Activated naive CD4-positive, alpha-beta T cell treated with anti-CD3 and anti-CD28 coated beads for 36 hours (primary cell): ENCODE measurements at regions of chr20 and their contacts with region 1.

Region 1: GRCh38 chr20:2101865-2102584 is 398 bp downstream of the STK35 start:
- DNase-seq: peak; percentile 91
- H3K4me3 Mint-ChIP-seq: peak overlapping the region; percentile 91
- H3K27ac Mint-ChIP-seq: peak overlapping the region; percentile 100
- H3K4me1 Mint-ChIP-seq: peaks cover 32% of the 10 kb centered on the region
- H3K27me3 Mint-ChIP-seq: no peaks in the 10 kb centered on the region

Region 2: GRCh38 chr20:1466211-1467081 is 635.6 kb before region 1 on chr20 and contains the start of gene NSFL1C:
- CTCF ChIA-PET with region 1: no interaction called
- intact Hi-C with region 1: loop called (anchors 2 kb)
- DNase-seq: peak; percentile 97
- H3K4me3 Mint-ChIP-seq: peak within 1 kb of the TSS; percentile 80
- H3K27ac Mint-ChIP-seq: peak within 1 kb of the TSS; percentile 71
- H3K4me1 Mint-ChIP-seq: peaks cover 44% of the 10 kb centered on the region
- H3K27me3 Mint-ChIP-seq: peaks cover 6% of the 10 kb centered on the region
- total RNA-seq, gene NSFL1C: 80.4 to 84.1 TPM

Region 3: DNA sequence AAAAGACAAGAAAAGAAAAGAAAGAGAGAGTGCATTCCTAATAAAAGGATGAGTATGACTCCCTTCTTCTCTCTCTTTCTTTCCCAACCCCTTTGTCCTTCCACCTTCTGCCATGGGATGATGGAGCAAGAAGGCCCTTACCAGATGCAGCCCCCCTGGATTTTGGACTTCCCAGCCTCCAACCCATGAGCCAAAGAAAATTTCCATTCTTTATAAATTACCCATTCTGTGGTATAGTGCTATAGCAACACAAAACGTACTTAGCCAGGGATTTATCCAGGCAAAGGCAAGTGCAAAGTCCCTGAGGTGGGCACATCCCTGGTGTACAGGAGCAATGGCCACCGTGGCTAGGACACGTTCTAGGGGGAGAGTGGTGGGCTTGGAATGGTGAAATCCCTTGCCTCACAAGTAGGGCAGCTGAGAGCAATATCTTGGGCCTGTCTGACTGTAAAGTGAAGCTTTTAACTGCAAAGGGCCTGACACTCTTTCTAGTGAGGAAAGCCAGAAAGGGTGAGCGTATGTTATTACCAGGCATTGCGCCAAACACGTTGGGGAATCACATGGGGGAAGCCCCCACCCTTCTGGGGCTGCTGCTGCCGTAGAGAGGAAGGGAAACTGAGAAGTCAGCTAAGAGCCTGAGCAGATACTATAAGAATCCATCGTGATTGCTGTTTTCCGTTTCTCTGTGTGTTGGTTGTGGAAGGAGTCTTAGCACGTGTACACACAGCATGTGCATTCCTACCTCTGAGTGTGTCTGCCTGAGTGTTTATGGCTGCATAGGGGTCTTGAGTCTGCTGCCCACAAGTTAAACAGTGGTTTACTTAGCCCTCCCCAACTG is 257.5 kb before region 1 on chr20:
- CTCF ChIA-PET with region 1: no interaction called
- intact Hi-C with region 1: loop called (anchors 2 kb)
- DNase-seq: peak; percentile 90
- H3K4me3 Mint-ChIP-seq: no peak overlapping the region
- H3K27ac Mint-ChIP-seq: peak overlapping the region; percentile 77
- H3K4me1 Mint-ChIP-seq: peaks cover 12% of the 10 kb centered on the region
- H3K27me3 Mint-ChIP-seq: peaks cover 5% of the 10 kb centered on the region

Region 4: DNA sequence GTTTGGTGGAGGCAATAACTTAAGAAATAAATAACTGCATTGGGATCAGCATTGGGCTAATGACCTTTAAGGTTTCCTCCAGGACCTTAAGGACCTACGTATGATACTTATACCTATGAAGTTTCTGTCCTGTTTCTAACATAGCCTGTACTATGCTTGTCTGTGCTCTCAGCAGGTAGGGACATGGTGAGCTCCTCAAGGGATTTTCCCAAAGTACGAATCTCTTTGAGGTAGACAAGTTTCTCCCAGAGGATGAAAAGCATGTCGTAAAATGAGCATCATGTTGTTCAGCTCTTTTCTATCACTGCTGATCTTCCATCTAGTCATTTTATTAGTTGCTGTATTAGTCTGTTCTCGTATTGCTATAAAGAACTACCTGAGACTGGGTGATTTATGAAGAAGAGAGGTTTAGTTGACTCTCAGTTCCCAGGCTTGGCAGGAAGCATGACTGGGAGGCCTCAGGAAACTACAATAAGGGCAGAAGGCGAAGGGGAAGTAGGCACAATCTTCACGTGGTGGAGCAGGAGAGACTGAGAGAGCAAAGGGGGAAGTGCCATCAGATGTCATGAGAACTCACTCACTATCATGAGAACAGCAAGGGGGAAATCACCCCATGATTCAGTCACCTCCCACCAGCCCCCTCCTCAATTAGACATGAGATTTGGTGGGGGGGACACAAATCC is 116.0 kb after region 1 on chr20:
- CTCF ChIA-PET with region 1: no interaction called
- intact Hi-C with region 1: loop called (anchors 5 kb)
- DNase-seq: peak; percentile 73
- H3K4me3 Mint-ChIP-seq: no peak overlapping the region
- H3K27ac Mint-ChIP-seq: peak overlapping the region; percentile 42
- H3K4me1 Mint-ChIP-seq: peaks cover 22% of the 10 kb centered on the region
- H3K27me3 Mint-ChIP-seq: no peaks in the 10 kb centered on the region

Region 5: GRCh38 chr20:2651772-2652723 is 550.0 kb after region 1 on chr20 and contains the start of gene NOP56:
- CTCF ChIA-PET with region 1: no interaction called
- intact Hi-C with region 1: loop called (anchors 2 kb)
- DNase-seq: peak; percentile 92
- H3K4me3 Mint-ChIP-seq: peak within 1 kb of the TSS; percentile 90
- H3K27ac Mint-ChIP-seq: peak within 1 kb of the TSS; percentile 90
- H3K4me1 Mint-ChIP-seq: peaks cover 48% of the 10 kb centered on the region
- H3K27me3 Mint-ChIP-seq: no peaks in the 10 kb centered on the region
- total RNA-seq, gene NOP56: 385 to 405 TPM